Tibial artery (tissue), 4 donors: ENCODE measurements at regions of chr3 and their contacts with region 1.

Region 1: DNA sequence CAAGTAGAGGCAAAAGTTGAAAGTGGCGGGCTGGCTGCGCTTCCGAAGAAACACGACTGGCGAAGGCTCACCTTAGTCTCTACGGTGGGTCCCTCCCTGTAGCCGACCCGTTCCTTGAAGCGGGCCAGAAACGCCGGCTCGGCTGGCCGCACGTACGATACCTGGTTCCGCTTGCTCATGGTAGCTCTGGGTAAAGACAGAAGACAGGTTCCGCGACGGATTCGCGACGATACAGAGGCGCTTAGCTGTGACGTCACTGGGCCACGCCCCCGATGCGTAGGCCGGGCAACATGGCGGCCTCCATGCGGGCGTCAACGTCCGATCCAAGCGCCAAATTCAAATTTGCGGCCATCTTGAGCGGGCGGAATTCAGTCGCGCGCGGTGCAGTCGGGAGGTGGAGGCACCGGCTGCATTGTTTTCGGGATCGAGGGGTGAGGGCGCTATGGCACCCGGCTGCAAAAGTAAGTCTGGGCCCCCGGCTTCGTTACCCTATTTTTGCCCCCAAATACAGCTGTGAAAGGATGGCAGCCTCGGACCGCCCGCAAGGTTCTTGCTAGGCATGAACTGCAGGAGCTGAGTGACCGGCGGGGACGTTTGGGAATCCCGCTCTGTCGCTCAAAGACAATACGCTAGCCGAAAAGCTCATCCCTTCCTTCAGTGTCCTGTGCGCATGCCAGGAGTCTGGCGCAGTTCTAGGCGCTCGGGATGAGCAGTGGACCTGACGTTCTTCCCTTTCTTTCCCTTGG is at the starts of genes KIAA1143 and KIF15:
- DNase-seq: peak; percentile 92 to 97
- H3K4me3 ChIP-seq: peak within 1 kb of the TSS; percentile 83 to 94
- H3K27ac ChIP-seq: peak within 1 kb of the TSS; percentile 80
- H3K4me1 ChIP-seq: peaks cover 0 to 19% (median 12%) of the 10 kb centered on the region in 4 donors
- H3K27me3 ChIP-seq: no peaks in the 10 kb centered on the region
- CTCF ChIP-seq: no peak

Region 2: DNA sequence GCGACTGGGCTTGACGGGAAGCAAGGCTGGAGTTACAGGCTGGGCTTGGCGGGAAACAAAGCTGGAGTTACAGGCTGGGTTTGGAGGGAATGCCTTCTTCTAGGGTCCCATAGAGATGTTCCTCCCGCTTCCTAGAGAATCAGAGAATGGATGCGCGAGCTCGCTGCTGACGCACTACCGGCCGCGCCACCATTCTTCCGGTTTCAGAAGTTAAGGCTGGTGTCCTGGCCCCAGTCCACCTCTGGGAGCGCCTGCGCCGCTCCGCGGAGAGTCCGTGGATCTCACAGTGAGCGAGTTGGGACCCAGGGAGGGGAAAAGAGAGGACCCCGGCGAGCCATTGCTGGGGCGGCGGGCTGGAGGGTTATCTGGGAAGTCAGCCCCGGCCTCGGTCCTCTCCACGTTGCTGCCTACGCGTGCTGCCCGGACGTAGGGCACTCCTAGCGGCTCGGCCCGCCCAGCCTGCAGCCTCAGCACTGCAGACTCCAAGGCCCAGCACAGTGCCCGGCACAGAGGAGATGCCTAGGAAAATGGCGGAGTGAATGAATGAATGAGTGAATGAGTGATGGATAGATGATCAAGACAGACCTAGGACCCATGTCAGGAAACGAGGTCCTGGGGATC is 49.0 kb before region 1 on chr3 and contains the start of gene ZNF502:
- intact Hi-C with region 1: loop called (anchors 5 kb)
- DNase-seq: peak; percentile 86 to 89
- H3K4me3 ChIP-seq: peak within 1 kb of the TSS; percentile 85 to 94
- H3K27ac ChIP-seq: peak within 1 kb of the TSS; percentile 77 to 78
- H3K4me1 ChIP-seq: peaks cover 0 to 10% (median 4%) of the 10 kb centered on the region in 4 donors
- H3K27me3 ChIP-seq: no peaks in the 10 kb centered on the region
- CTCF ChIP-seq: peak; percentile 42 to 51

Region 3: DNA sequence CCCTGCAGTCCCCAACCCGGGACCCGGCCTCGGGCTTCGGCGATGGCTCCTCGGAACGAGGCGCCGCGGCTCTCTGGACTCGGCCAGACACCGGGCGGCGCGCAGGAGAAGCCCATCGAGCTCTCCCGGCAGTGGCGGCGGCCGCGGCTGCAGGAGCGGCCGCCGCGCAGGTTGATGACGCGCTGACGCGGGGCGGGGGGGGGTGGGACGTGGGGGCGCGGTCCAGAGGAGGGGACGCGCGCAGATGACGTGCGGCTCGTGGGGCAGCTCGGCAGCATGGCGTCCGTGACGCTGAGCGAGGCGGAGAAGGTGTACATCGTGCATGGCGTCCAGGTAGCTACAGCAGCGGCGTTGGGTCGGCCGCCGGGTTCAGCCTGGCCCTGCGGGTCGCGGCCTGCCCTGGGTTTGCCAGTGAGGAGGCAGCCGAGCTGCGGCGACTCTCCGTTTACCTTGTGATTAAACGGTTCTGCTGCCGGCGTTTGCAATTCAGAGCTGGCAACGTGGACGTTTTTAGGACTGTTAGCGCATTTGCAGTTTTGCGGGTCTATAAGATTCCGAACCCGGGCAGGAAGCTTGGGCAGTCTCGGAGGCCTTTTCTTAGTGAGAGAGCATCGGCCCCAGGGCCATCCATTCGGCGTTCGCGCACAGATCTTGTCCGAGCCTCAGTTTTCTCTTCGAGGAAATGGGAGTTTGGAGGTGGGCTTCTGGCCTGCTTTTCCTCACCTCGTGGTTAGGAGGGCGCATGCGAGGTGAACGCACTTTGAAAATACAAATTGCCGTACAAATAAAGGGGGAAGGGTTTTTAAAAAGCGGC is 214.6 kb after region 1 on chr3 and contains the starts of genes EXOSC7 and ZDHHC3:
- intact Hi-C with region 1: loop called (anchors 5 kb)
- DNase-seq: peak; percentile 81 to 90
- H3K4me3 ChIP-seq: peak within 1 kb of the TSS; percentile 72 to 84
- H3K27ac ChIP-seq: peak within 1 kb of the TSS; percentile 83
- H3K4me1 ChIP-seq: peaks cover 0 to 43% (median 22%) of the 10 kb centered on the region in 4 donors
- H3K27me3 ChIP-seq: no peaks in the 10 kb centered on the region
- CTCF ChIP-seq: no peak